CD14-positive monocyte (primary cell): ENCODE measurements at regions of chr4 and their contacts with region 1.

Region 1: GRCh38 chr4:11480683-11481082 is 52.0 kb upstream of the HS3ST1 start:
- DNase-seq: peak; percentile 96 to 98 (median 98)
- H3K4me3 ChIP-seq: peak overlapping the region in 1 of 3 experiments; percentile 57
- H3K4me3 Mint-ChIP-seq: no peak overlapping the region
- H3K27ac ChIP-seq: peak overlapping the region in 1 of 2 donors; percentile 87
- H3K27ac Mint-ChIP-seq: no peak overlapping the region
- H3K4me1 ChIP-seq: peaks cover 37 to 49% of the 10 kb centered on the region in 2 donors
- H3K4me1 Mint-ChIP-seq: peaks cover 3% of the 10 kb centered on the region
- H3K27me3 ChIP-seq: no peaks in the 10 kb centered on the region
- H3K27me3 Mint-ChIP-seq: peaks cover 0 to 3% (median 0%) of the 10 kb centered on the region in 3 donors
- CTCF ChIP-seq: no peak

Region 2: DNA sequence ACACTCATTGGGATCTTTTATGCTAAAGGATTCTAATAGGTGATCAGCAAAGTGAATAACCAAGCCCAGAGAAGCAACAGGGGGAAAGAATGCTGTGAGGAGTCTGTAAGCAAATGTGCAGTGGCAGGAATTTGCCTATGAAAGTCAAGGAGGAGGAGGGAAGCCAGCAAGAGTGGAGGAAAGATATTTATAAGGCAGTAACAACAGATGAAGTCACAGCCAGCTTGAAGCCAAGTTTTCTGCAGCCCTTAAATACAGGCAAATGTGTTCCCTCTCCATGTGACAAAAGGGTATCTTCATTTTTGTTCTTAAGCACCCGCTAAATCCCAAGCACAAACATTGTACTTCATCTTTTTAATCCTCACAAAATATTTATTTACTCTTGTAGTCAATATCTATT is 521.1 kb before region 1 on chr4:
- intact Hi-C with region 1: loop called in 1 of 2 experiments (anchors 10 kb)
- DNase-seq: no peak
- H3K4me3 ChIP-seq: no peak overlapping the region
- H3K4me3 Mint-ChIP-seq: no peak overlapping the region
- H3K27ac ChIP-seq: no peak overlapping the region
- H3K27ac Mint-ChIP-seq: peak overlapping the region in 1 of 7 donors; percentile 78
- H3K4me1 ChIP-seq: peaks cover 6 to 8% of the 10 kb centered on the region in 2 donors
- H3K4me1 Mint-ChIP-seq: peaks cover 5% of the 10 kb centered on the region
- H3K27me3 ChIP-seq: no peaks in the 10 kb centered on the region
- H3K27me3 Mint-ChIP-seq: peaks cover 2 to 4% (median 3%) of the 10 kb centered on the region in 3 donors
- CTCF ChIP-seq: no peak

Region 3: GRCh38 chr4:11428899-11429698 is 51.6 kb before region 1 on chr4:
- intact Hi-C with region 1: no loop called
- DNase-seq: peak; percentile 45 to 60 (median 59)
- H3K4me3 ChIP-seq: peak overlapping the region; percentile 16 to 80 (median 34)
- H3K4me3 Mint-ChIP-seq: peak overlapping the region; percentile 81 to 95
- H3K27ac ChIP-seq: no peak overlapping the region
- H3K27ac Mint-ChIP-seq: peak overlapping the region in 2 of 7 donors; percentile 10 to 68
- H3K4me1 ChIP-seq: peaks cover 20 to 28% of the 10 kb centered on the region in 2 donors
- H3K4me1 Mint-ChIP-seq: peaks cover 21% of the 10 kb centered on the region
- H3K27me3 ChIP-seq: peaks cover 43 to 52% of the 10 kb centered on the region in 2 donors
- H3K27me3 Mint-ChIP-seq: peaks cover 42 to 62% (median 46%) of the 10 kb centered on the region in 3 donors
- CTCF ChIP-seq: peak; percentile 73

Region 4: DNA sequence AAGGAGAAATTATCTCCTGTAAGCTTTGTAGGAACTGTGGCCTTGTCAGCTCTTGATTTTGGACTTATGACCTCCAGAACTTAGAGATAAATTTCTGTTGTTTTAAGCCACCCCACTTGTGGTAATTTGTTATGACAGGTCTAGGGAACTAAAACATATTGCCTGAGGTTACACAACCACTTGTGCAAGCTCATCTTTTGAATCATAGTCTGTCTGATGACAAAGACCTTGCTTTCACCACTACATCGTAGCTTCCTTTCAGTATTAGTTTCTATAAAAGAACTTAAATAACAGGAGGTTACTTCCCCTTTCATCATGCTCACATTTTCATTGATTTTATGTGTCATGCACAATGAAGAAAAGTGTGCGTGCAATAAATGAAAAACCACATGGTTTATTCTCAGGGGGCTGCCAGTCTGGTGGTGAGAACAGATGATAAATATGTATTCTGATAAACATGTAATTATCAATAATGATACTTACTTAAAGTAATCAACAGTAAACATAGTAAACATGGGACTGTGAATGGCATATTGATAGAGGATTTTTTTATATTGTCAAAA is 638.0 kb after region 1 on chr4:
- intact Hi-C with region 1: loop called (anchors 10 kb)
- DNase-seq: peak; percentile 95 to 100 (median 98)
- H3K4me3 ChIP-seq: peak overlapping the region in 1 of 3 experiments; percentile 32
- H3K4me3 Mint-ChIP-seq: no peak overlapping the region
- H3K27ac ChIP-seq: peak overlapping the region; percentile 50 to 91
- H3K27ac Mint-ChIP-seq: peak overlapping the region; percentile 92 to 98 (median 97)
- H3K4me1 ChIP-seq: peaks cover 62 to 66% of the 10 kb centered on the region in 2 donors
- H3K4me1 Mint-ChIP-seq: peaks cover 72% of the 10 kb centered on the region
- H3K27me3 ChIP-seq: no peaks in the 10 kb centered on the region
- H3K27me3 Mint-ChIP-seq: peaks cover 0 to 1% (median 0%) of the 10 kb centered on the region in 3 donors
- CTCF ChIP-seq: no peak